ENCODE measurements at regions of chr9 and their contacts with region 1.

Region 1: DNA sequence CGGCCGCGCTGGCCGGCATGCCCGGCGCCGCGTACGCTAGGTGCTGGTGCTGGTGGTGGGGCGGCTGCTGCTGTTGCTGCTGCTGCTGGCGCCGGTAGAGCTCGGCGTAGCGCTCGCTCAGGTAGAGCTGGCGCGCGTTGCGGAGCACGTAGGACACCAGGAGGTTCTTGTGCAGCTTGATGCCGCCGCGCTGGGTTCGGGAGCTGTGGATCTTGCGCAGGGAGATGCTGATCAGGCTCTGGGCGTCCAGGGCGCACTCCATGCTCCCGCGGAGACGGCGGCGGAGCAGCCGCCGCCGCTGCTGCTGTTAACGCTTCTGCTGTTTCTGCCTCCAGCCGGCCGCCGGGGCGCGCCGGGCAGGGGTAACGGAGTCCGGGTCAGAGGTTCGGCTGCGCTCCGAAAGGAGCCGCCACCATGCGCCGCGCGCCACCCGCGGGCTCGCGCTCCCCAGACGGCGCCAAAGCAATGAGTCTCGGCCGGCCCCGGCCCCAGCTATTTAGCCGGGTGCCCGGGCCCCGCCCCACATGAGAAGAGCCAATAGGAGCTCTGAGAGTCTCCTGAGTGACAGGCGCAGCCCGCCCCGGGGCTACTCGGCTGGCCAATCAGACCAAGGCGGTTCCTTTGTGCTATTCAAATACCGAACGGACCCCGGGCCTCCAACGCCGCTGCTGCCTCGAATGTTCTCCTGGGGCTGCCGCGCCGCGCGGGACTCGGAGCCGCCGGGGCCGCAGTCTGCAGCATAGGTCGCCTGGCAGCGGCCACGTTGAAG is at the start of gene IER5L:
- DNase-seq: peak; percentile 99
- CTCF ChIP-seq: no peak

Region 2: GRCh38 chr9:129154866-129155477 is 23.0 kb before region 1 on chr9:
- CTCF ChIA-PET with region 1: interaction called, 680 read pairs
- POLR2A ChIA-PET with region 1: no interaction called
- DNase-seq: no peak
- CTCF ChIP-seq: no peak

Region 3: DNA sequence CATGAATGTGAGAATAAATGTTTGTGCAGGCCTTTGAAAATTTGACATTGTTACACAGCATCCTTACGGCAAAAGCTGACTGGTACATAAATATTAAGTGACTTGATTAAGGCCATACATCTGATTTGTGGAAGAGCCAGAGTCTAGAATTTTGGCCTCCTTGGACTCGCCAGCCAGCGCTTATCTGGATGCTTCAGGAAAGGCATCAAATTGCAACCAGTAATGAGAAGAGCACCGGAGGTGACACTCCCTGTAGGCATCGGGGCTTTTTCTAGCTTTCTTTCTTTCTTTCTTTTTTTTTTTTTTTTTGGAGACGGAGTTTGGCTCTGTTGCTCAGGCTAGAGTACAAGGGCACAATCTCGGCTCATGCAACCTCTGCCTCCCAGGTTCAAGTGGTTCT is 13.3 kb after region 1 on chr9:
- CTCF ChIA-PET with region 1: interaction called, 11 read pairs
- POLR2A ChIA-PET with region 1: interaction called, 3 read pairs
- DNase-seq: no peak
- CTCF ChIP-seq: no peak

Region 4: DNA sequence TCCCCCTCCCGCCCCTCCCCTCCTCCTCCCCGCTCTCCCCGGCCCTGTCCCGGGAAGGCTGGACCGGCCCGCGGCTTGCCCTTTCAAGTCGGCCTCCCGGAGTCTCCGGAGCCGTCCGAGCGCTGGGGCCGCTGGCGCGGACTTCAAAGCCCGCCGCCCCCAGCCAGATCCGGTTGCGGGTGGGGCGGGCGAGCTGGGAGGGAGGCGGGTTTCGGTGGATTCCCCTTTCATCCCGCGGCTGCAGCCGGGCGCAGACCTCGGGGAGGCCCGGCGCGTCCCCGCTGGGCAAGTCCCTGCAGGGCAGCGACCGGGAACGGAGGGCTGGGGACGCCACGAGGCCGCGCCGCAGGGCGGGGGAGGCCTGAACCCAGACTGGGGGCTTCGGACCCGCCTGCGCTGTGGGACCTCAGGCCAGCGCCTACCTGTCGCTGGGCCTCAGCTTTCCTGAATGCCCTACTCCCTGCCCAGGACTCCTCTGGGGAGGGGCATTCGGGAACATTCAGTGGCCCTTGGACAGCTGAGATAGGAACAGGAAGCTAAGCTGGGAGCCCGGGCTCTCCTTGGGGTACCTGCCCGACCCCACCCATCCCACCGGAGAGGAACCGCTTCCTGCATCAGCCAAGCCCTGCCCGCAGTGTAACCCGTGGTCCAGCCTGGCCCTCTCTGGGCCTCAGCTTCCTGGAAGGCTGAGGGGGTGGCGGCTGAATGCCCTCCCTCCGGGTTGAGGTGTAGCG is 419.5 kb after region 1 on chr9:
- CTCF ChIA-PET with region 1: interaction called, 14 read pairs
- POLR2A ChIA-PET with region 1: interaction called, 4 read pairs
- DNase-seq: peak; percentile 76
- CTCF ChIP-seq: no peak

Region 5: GRCh38 chr9:129626079-129626624 is 448.2 kb after region 1 on chr9 and contains the start of gene NTMT1:
- CTCF ChIA-PET with region 1: interaction called, 42 read pairs
- POLR2A ChIA-PET with region 1: interaction called, 5 read pairs
- DNase-seq: peak; percentile 94
- CTCF ChIP-seq: no peak

Measured in GM10248 (cell line).